ENCODE measurements at regions of chr6 and their contacts with region 1.

Region 1: GRCh38 chr6:2791124-2791974 is 26.2 kb downstream of the WRNIP1 start:
- DNase-seq: peak in 1 of 2 donors; percentile 67
- H3K4me3 ChIP-seq: no peak overlapping the region
- H3K27ac ChIP-seq: peak overlapping the region; percentile 72
- H3K4me1 ChIP-seq: peaks cover 40% of the 10 kb centered on the region
- H3K27me3 ChIP-seq: no peaks in the 10 kb centered on the region
- CTCF ChIP-seq: peak; percentile 42 to 64 (median 55)
- POLR2A ChIP-seq: no peak

Region 2: DNA sequence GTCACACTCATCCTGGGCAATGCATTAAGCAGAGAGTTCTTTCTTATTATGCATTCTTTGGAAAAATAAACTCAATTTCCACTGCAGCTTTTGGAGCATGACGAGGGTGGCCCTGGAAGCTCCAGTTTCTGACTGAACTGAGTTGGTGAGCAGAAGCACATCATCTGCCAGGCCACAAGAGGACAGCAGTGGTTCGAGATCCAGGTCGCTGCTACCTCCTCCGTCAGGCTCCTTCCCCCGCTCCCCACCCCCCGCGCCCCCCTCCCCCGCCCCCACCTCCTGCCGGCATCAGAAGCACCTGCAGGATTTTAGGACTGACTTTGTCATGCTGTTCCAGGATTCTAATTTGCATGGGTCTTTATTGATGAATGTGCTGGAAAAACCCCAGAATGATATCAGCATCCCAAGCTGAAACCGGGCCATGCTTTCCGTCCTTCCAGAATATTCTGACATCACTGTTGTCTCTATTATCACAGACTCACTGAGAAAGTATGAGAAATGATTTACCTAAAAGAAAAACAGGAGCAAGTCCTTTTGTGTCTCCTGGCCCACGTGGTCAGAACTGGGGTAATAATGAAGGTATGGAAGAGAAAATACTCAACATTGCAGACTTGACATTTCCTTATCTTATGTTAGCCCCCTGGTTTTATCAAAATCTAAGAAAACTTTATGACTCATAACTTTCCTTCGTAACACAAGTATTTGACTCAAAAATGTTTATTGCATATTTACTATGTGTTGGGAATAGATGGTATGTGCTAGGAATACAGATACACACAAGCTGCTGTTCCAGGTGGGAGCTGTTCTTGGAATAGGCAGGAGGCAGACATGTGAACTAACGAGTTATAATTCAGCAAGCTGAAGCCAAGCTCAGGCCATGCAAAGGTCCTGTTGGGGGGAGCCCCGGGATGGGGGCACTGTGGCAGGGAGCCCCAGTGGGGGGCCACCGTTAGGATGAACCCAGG is 1878.2 kb before region 1 on chr6:
- intact Hi-C with region 1: no loop called
- DNase-seq: peak; percentile 49
- H3K4me3 ChIP-seq: no peak overlapping the region
- H3K27ac ChIP-seq: no peak overlapping the region
- H3K4me1 ChIP-seq: no peaks in the 10 kb centered on the region
- H3K27me3 ChIP-seq: no peaks in the 10 kb centered on the region
- CTCF ChIP-seq: peak in 1 of 3 experiments; percentile 10
- POLR2A ChIP-seq: no peak

Region 3: GRCh38 chr6:2765166-2765895 is 26.0 kb before region 1 on chr6 and contains the start of gene WRNIP1:
- intact Hi-C with region 1: no loop called
- DNase-seq: peak in 1 of 2 donors; percentile 100
- H3K4me3 ChIP-seq: peak within 1 kb of the TSS; percentile 78 to 85
- H3K27ac ChIP-seq: peak within 1 kb of the TSS; percentile 92
- H3K4me1 ChIP-seq: peaks cover 45% of the 10 kb centered on the region
- H3K27me3 ChIP-seq: no peaks in the 10 kb centered on the region
- CTCF ChIP-seq: peak; percentile 29 to 55 (median 42)
- POLR2A ChIP-seq: peak in 1 of 2 donors; percentile 81
- total RNA-seq, gene WRNIP1: 50.1 TPM

Region 4: DNA sequence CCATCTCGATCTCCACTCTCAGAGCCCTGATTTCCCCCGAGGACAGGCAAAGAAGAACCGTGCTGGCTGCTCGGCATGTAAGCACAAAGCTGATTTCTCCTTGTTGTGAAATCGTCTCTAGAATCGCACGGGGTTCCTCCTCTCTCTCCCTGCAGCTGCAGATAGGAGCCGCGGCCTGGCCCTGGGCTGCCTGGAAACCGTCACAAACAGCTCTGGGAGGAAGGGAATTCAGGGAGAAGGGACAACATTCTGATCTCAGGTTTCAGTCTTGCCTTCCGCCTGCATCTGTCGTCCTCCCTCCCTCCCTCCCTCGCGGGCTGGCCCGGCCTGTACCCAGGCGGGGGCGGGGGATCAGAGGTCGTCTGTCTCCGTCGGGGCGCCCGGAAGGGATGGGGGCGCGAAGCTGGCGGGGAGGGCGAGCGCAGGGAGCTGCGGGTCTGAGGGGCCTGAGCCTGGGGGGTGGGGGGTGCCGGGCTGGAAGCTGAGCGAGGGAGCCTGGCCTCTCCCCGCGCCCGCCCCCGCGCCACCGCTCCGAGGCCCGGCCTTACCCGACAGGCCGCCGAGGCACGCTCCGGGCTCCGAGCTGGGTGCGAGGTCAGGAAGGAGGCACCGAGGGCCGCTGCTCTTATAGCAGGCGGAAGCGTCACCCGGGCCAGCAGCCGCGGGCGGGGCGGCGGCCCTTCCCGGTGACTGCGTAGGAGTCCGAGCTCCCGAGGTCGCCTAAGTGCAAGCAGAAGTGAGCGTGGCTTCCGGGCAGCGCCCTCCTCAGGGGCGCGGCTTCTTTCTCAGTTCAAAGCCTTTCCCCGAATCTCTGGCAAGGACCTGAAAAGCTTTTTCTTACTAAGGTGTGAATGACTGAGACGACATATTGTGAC is 50.2 kb after region 1 on chr6 and contains the start of gene SERPINB1:
- intact Hi-C with region 1: loop called (anchors 10 kb)
- DNase-seq: no peak
- H3K4me3 ChIP-seq: peak within 1 kb of the TSS; percentile 58 to 67
- H3K27ac ChIP-seq: peak within 1 kb of the TSS; percentile 92
- H3K4me1 ChIP-seq: peaks cover 34% of the 10 kb centered on the region
- H3K27me3 ChIP-seq: no peaks in the 10 kb centered on the region
- CTCF ChIP-seq: no peak
- POLR2A ChIP-seq: peak in 1 of 2 donors; percentile 56
- total RNA-seq, gene SERPINB1: 38.1 TPM

Region 5: GRCh38 chr6:2876210-2877056 is 85.1 kb after region 1 on chr6:
- intact Hi-C with region 1: no loop called
- DNase-seq: no peak
- H3K4me3 ChIP-seq: peak overlapping the region; percentile 55 to 61
- H3K27ac ChIP-seq: peak overlapping the region; percentile 64
- H3K4me1 ChIP-seq: peaks cover 25% of the 10 kb centered on the region
- H3K27me3 ChIP-seq: no peaks in the 10 kb centered on the region
- CTCF ChIP-seq: no peak
- POLR2A ChIP-seq: peak in 1 of 2 donors; percentile 9

Region 6: GRCh38 chr6:2900821-2901644 is 109.7 kb after region 1 on chr6:
- intact Hi-C with region 1: no loop called
- DNase-seq: no peak
- H3K4me3 ChIP-seq: peak overlapping the region; percentile 58 to 76
- H3K27ac ChIP-seq: peak overlapping the region; percentile 87
- H3K4me1 ChIP-seq: peaks cover 41% of the 10 kb centered on the region
- H3K27me3 ChIP-seq: no peaks in the 10 kb centered on the region
- CTCF ChIP-seq: no peak
- POLR2A ChIP-seq: no peak